ENCODE measurements at regions of chrX and their contacts with region 1.

Region 1: GRCh38 chrX:40097497-40098263 is at the start of gene BCOR:
- DNase-seq: no peak
- H3K4me3 ChIP-seq: peak within 1 kb of the TSS; percentile 74 to 86 (median 76)
- H3K27ac ChIP-seq: peak within 1 kb of the TSS; percentile 86 to 93 (median 92)
- H3K4me1 ChIP-seq: peaks cover 11 to 48% (median 20%) of the 10 kb centered on the region in 3 donors
- H3K27me3 ChIP-seq: peaks cover 0 to 24% (median 0%) of the 10 kb centered on the region in 4 donors
- CTCF ChIP-seq: no peak
- POLR2A ChIP-seq: peak in 3 of 4 donors; percentile 30 to 88 (median 86)
- total RNA-seq, gene BCOR: 12.0 to 20.1 (median 17.4) TPM

Region 2: DNA sequence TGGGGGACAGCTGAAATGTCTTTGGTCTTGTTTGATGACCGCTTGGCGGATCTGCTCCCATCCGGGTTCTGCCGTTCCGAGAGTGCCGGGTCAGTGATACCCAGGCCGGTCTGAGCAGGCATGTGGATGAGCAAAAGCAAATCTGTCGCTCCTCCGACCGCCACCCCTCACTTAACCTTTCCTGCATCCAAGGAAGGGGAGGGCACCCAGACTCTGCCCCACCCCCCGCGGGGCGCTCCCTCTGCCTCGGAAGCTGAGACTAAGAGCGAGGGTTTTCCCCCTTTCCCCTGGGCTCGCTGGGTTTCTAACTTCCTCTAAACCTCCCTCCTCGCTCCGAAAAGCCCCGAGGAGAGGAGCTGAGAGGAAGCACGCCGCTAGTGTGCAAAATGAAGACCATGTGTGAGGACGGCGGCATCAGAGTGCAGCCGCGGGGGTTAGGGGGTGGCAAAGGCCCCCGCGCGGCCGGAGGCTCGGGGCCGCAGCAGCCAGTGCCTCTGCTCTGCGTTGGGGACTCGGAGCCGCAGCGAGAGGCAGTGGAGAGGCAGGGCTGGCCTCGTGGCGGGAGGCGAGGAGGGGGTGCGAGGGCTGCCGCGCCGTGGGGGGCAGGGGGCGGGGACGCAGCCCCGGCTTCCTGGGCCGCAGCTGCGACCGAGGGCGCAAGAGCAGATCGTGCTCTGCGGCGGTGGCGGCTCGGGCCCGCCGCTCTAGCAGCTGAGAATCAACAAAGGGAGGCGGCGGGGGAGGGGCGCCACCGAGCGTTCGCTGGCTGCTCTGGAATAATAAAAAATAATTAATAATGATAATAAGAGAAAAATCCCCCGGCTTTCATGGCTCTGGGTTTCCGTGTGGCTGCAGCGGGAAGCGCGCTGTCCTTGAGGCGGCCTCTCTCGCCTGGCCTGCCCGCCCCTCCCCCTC is 55.9 kb after region 1 on chrX:
- intact Hi-C with region 1: loop called (anchors 5 kb)
- DNase-seq: peak; percentile 3
- H3K4me3 ChIP-seq: peak overlapping the region; percentile 36 to 62 (median 49)
- H3K27ac ChIP-seq: peak overlapping the region; percentile 61 to 78 (median 64)
- H3K4me1 ChIP-seq: peaks cover 8 to 57% (median 38%) of the 10 kb centered on the region in 3 donors
- H3K27me3 ChIP-seq: peaks cover 0 to 11% (median 0%) of the 10 kb centered on the region in 4 donors
- CTCF ChIP-seq: peak in 2 of 6 experiments; percentile 11 to 24
- POLR2A ChIP-seq: no peak

Region 3: GRCh38 chrX:40169193-40170101 is 71.8 kb after region 1 on chrX:
- intact Hi-C with region 1: loop called (anchors 5 kb)
- DNase-seq: peak; percentile 20
- H3K4me3 ChIP-seq: peak overlapping the region in 2 of 4 donors; percentile 11 to 19
- H3K27ac ChIP-seq: peak overlapping the region in 3 of 4 donors; percentile 36 to 93 (median 49)
- H3K4me1 ChIP-seq: peaks cover 15 to 75% (median 21%) of the 10 kb centered on the region in 3 donors
- H3K27me3 ChIP-seq: peaks cover 0 to 10% (median 0%) of the 10 kb centered on the region in 4 donors
- CTCF ChIP-seq: peak in 5 of 6 experiments; percentile 40 to 59 (median 50)
- POLR2A ChIP-seq: no peak

Region 4: GRCh38 chrX:40449396-40449795 is 351.7 kb after region 1 on chrX:
- intact Hi-C with region 1: no loop called
- DNase-seq: no peak
- H3K4me3 ChIP-seq: no peak overlapping the region
- H3K27ac ChIP-seq: peak overlapping the region in 3 of 4 donors; percentile 49 to 68 (median 54)
- H3K4me1 ChIP-seq: peaks cover 9 to 68% (median 13%) of the 10 kb centered on the region in 3 donors
- H3K27me3 ChIP-seq: no peaks in the 10 kb centered on the region
- CTCF ChIP-seq: no peak
- POLR2A ChIP-seq: no peak

Measured in esophagus squamous epithelium (tissue), 5 donors.